Heart left ventricle (tissue), 16 donors: ENCODE measurements at regions of chr1 and their contacts with region 1.

Region 1: DNA sequence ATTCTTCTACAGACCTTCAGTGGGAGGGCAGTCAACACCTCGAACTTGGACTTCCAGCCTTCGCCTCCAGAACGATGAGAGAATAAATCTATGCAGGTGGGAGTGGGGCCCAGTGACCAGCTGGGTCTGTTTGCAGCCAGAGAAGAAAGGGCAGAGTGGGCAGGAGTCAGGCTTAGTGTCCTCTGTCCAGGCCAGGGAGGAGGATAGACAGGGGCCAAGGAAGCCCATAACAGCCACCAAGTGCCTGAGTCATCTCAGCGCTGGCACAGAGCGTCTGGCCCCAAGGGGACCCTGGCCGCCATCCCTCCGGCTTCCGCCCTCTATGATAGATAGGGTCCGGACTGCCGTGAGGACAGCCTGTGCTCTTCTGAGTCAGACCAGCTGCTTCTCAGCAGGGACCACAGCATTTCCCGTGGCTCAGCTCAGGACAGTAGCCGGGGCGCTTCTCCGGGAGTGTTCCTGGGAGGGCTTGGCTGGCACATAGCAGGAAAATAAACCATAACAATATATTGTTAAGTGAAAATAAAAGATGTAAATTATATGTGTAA is 133.1 kb upstream of the C1orf174 start:
- DNase-seq: no peak
- ATAC-seq: no peak
- H3K4me3 ChIP-seq: no peak overlapping the region
- H3K27ac ChIP-seq: no peak overlapping the region
- H3K4me1 ChIP-seq: no peaks in the 10 kb centered on the region
- H3K27me3 ChIP-seq: peaks cover 0 to 50% (median 8%) of the 10 kb centered on the region in 9 donors
- CTCF ChIP-seq: no peak
- POLR2A ChIP-seq: no peak

Region 2: GRCh38 chr1:3978990-3979325 is 54.2 kb before region 1 on chr1:
- intact Hi-C with region 1: loop called in 1 of 10 experiments (anchors 10 kb)
- DNase-seq: no peak
- ATAC-seq: no peak
- H3K4me3 ChIP-seq: no peak overlapping the region
- H3K27ac ChIP-seq: no peak overlapping the region
- H3K4me1 ChIP-seq: no peaks in the 10 kb centered on the region
- H3K27me3 ChIP-seq: peaks cover 0 to 16% (median 0%) of the 10 kb centered on the region in 9 donors
- CTCF ChIP-seq: no peak
- POLR2A ChIP-seq: no peak

Region 3: DNA sequence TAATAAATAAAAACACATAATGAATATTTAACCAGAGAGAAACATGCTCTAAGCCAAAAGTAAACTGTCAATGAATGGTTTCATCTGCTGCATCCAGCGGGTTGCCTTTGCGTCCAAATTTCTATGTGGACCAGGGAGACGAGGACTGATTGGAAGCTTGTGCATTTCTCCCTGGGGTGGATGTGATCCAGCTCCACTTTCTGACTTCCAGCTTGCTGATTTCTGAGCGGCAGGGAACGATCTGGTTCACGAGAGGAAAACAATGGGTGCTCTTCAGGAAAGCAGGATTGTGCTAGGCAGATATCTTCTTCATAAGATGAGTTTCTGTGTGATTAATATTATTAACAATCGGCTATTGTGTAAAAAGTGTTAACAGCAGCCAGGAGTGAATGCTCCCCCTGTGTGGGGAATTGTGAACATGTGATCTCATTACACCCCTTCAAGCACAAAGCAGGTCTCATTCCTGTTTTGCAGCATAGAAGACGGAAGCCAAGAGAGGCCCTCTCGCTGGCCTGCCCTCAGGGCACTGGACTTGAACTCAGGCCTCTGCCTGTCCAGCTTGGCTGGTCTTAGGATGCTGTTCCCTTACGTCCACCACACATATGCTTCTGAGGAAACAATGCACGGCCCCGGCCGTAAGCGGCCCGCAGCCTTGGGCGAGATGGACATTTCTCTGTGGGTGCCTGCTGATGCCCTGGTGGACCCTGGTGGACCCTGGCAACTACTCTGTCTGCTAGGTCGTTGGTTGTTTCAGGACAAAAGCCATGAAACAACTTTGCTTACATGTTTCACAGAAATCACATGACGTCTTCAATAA is 50.2 kb after region 1 on chr1:
- intact Hi-C with region 1: no loop called
- DNase-seq: no peak
- ATAC-seq: no peak
- H3K4me3 ChIP-seq: no peak overlapping the region
- H3K27ac ChIP-seq: no peak overlapping the region
- H3K4me1 ChIP-seq: no peaks in the 10 kb centered on the region
- H3K27me3 ChIP-seq: peaks cover 0 to 7% (median 0%) of the 10 kb centered on the region in 9 donors
- CTCF ChIP-seq: no peak
- POLR2A ChIP-seq: no peak